Mammary epithelial cell (primary cell): ENCODE measurements at regions of chr10 and their contacts with region 1.

Region 1: GRCh38 chr10:73886085-73886529 is 11.8 kb upstream of the CAMK2G start:
- DNase-seq: peak; percentile 68
- H3K4me3 ChIP-seq: no peak overlapping the region
- H3K27ac ChIP-seq: peak overlapping the region; percentile 98
- H3K4me1 ChIP-seq: peaks cover 38% of the 10 kb centered on the region
- H3K27me3 ChIP-seq: no peaks in the 10 kb centered on the region
- CTCF ChIP-seq: peak; percentile 87 to 88

Region 2: DNA sequence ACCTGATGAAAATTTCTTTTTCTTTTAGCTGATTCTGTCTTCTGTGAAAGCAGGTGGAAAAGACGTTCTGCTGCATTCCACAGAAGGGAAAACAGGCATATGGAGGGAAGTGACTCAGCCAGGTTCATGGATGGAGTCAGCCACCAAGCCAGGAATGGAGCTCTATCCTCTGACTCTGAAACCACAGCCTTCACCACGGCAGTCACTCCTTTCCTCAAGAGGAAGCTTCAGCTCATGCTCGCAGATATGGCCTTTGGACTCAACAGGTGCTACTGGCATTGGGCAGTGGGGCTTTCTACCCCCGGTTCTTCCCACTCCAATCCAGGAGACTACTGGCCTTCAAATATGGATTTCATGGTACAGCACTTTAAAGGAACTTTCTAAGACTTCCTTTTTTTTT is 13.3 kb after region 1 on chr10:
- CTCF ChIA-PET with region 1: interaction called, 4 read pairs
- dilution Hi-C with region 1: no loop called
- in situ Hi-C with region 1: no loop called
- intact Hi-C with region 1: loop called (anchors 1 kb)
- DNase-seq: peak; percentile 96
- H3K4me3 ChIP-seq: no peak overlapping the region
- H3K27ac ChIP-seq: peak overlapping the region; percentile 78
- H3K4me1 ChIP-seq: peaks cover 29% of the 10 kb centered on the region
- H3K27me3 ChIP-seq: no peaks in the 10 kb centered on the region
- CTCF ChIP-seq: no peak

Region 3: DNA sequence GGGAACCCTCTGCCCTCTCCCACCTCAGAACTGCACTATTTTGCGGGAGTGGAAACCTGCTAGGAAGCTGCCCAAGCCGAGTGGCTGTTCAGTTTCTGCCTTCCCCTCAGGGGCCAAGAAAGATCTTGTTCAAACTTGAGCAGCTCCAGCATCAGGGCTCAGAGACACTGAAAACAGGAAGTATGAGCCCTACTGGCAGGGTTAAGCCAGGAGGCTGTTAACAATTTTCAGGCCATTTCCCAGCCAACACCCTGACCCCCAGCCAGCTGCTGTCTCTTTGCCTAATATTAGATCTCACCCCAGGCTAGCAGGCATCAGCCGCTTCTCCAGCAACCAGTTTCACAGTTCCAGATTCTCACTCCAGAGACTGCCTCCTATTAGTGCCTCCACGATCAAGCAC is 34.0 kb after region 1 on chr10:
- CTCF ChIA-PET with region 1: interaction called, 3 read pairs
- dilution Hi-C with region 1: no loop called
- in situ Hi-C with region 1: no loop called
- intact Hi-C with region 1: loop called (anchors 1 kb)
- DNase-seq: peak; percentile 95
- H3K4me3 ChIP-seq: no peak overlapping the region
- H3K27ac ChIP-seq: peak overlapping the region; percentile 96
- H3K4me1 ChIP-seq: peaks cover 43% of the 10 kb centered on the region
- H3K27me3 ChIP-seq: no peaks in the 10 kb centered on the region
- CTCF ChIP-seq: peak in 1 of 2 donors; percentile 27

Region 4: GRCh38 chr10:73940634-73941221 is 54.6 kb after region 1 on chr10:
- CTCF ChIA-PET with region 1: interaction called, 10 read pairs
- dilution Hi-C with region 1: no loop called
- in situ Hi-C with region 1: loop called (anchors 5 kb)
- intact Hi-C with region 1: loop called (anchors 1 kb)
- DNase-seq: peak; percentile 51
- H3K4me3 ChIP-seq: no peak overlapping the region
- H3K27ac ChIP-seq: peak overlapping the region; percentile 55
- H3K4me1 ChIP-seq: peaks cover 21% of the 10 kb centered on the region
- H3K27me3 ChIP-seq: no peaks in the 10 kb centered on the region
- CTCF ChIP-seq: peak; percentile 68 to 98

Region 5: DNA sequence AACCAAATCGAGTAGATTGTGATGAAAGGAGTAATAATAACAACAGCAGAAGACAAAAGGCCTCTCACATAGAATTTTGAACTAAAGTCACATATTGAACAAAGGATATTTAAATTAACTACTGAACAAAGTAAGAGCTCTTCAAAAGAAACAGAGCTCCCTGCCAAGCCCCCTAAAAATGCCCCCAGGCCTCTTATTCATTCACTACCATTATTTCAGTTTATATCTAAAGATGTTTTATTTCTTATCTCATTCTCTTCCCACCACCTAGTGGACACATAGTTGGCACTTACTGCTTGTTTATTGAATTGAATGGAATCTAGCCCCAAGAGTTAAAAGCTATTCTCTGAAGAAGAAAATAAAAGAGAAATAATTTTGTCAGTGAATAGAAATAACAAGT is 149.2 kb after region 1 on chr10:
- CTCF ChIA-PET with region 1: no interaction called
- dilution Hi-C with region 1: no loop called
- in situ Hi-C with region 1: no loop called
- intact Hi-C with region 1: loop called (anchors 1 kb)
- DNase-seq: no peak
- H3K4me3 ChIP-seq: no peak overlapping the region
- H3K27ac ChIP-seq: no peak overlapping the region
- H3K4me1 ChIP-seq: no peaks in the 10 kb centered on the region
- H3K27me3 ChIP-seq: no peaks in the 10 kb centered on the region
- CTCF ChIP-seq: peak; percentile 27 to 43

Region 6: GRCh38 chr10:74081192-74081803 is 195.2 kb after region 1 on chr10:
- CTCF ChIA-PET with region 1: interaction called, 38 read pairs
- dilution Hi-C with region 1: no loop called
- in situ Hi-C with region 1: loop called (anchors 10 to 25 kb)
- intact Hi-C with region 1: loop called (anchors 1 kb)
- DNase-seq: peak; percentile 38
- H3K4me3 ChIP-seq: no peak overlapping the region
- H3K27ac ChIP-seq: no peak overlapping the region
- H3K4me1 ChIP-seq: peaks cover 31% of the 10 kb centered on the region
- H3K27me3 ChIP-seq: no peaks in the 10 kb centered on the region
- CTCF ChIP-seq: peak; percentile 75 to 79

Region 7: GRCh38 chr10:74234569-74234968 is 348.5 kb after region 1 on chr10:
- CTCF ChIA-PET with region 1: no interaction called
- dilution Hi-C with region 1: no loop called
- in situ Hi-C with region 1: no loop called
- intact Hi-C with region 1: loop called (anchors 5 kb)
- DNase-seq: no peak
- H3K4me3 ChIP-seq: no peak overlapping the region
- H3K27ac ChIP-seq: no peak overlapping the region
- H3K4me1 ChIP-seq: peaks cover 11% of the 10 kb centered on the region
- H3K27me3 ChIP-seq: no peaks in the 10 kb centered on the region
- CTCF ChIP-seq: peak; percentile 23 to 42